HEK293T (cell line): ENCODE measurements at regions of chr7 and their contacts with region 1.

Region 1: GRCh38 chr7:90155206-90155605 is 937 bp downstream of the STEAP1 start:
- DNase-seq: no peak

Region 2: GRCh38 chr7:90022213-90022612 is 133.0 kb before region 1 on chr7:
- CTCF ChIA-PET with region 1: no interaction called
- POLR2A ChIA-PET with region 1: no interaction called
- DNase-seq: no peak

Region 3: GRCh38 chr7:90320801-90321494 is 165.7 kb after region 1 on chr7 and contains the start of gene FAM237B:
- CTCF ChIA-PET with region 1: no interaction called
- POLR2A ChIA-PET with region 1: no interaction called
- DNase-seq: peak; percentile 55

Region 4: DNA sequence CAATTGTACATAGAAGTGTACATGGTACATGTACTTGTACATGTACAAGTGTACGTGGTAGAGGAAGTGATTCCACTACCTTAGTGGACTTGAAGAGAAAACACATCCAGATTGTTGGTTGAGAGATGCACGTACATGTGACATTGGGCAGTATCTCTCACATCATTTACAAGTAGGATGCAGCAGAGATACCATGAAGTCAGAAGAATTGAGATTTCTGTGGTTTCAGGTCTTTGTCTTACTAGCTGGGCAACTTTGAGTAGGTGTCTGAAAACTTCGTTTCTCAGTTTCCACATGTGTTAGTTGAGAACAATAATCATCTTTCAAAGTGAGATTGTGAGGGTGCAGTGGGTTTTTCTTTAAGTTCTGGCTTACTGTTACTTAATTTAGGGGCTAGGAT is 269.5 kb after region 1 on chr7:
- CTCF ChIA-PET with region 1: interaction called, 10 read pairs
- POLR2A ChIA-PET with region 1: interaction called, 4 read pairs
- DNase-seq: no peak